Spleen (tissue), 13 donors: ENCODE measurements at regions of chr6 and their contacts with region 1.

Region 1: GRCh38 chr6:133577851-133578250 is 311.1 kb upstream of the TCF21 start:
- DNase-seq: no peak
- H3K4me3 ChIP-seq: no peak overlapping the region
- H3K27ac ChIP-seq: no peak overlapping the region
- H3K4me1 ChIP-seq: no peaks in the 10 kb centered on the region
- H3K27me3 ChIP-seq: no peaks in the 10 kb centered on the region
- CTCF ChIP-seq: no peak
- POLR2A ChIP-seq: no peak

Region 2: GRCh38 chr6:133532908-133533307 is 44.9 kb before region 1 on chr6:
- intact Hi-C with region 1: no loop called
- DNase-seq: no peak
- H3K4me3 ChIP-seq: no peak overlapping the region
- H3K27ac ChIP-seq: no peak overlapping the region
- H3K4me1 ChIP-seq: no peaks in the 10 kb centered on the region
- H3K27me3 ChIP-seq: peaks cover 0 to 4% (median 0%) of the 10 kb centered on the region in 7 donors
- CTCF ChIP-seq: no peak
- POLR2A ChIP-seq: no peak

Region 3: GRCh38 chr6:133916650-133917151 is 338.9 kb after region 1 on chr6:
- intact Hi-C with region 1: loop called (anchors 10 kb)
- DNase-seq: peak; percentile 89
- H3K4me3 ChIP-seq: no peak overlapping the region
- H3K27ac ChIP-seq: peak overlapping the region in 3 of 8 donors; percentile 19 to 49 (median 21)
- H3K4me1 ChIP-seq: peaks cover 0 to 17% (median 5%) of the 10 kb centered on the region in 6 donors
- H3K27me3 ChIP-seq: peaks cover 0 to 15% (median 5%) of the 10 kb centered on the region in 7 donors
- CTCF ChIP-seq: peak; percentile 36 to 84 (median 79)
- POLR2A ChIP-seq: no peak